HepG2 (cell line): ENCODE measurements at regions of chr22 and their contacts with region 1.

Region 1: DNA sequence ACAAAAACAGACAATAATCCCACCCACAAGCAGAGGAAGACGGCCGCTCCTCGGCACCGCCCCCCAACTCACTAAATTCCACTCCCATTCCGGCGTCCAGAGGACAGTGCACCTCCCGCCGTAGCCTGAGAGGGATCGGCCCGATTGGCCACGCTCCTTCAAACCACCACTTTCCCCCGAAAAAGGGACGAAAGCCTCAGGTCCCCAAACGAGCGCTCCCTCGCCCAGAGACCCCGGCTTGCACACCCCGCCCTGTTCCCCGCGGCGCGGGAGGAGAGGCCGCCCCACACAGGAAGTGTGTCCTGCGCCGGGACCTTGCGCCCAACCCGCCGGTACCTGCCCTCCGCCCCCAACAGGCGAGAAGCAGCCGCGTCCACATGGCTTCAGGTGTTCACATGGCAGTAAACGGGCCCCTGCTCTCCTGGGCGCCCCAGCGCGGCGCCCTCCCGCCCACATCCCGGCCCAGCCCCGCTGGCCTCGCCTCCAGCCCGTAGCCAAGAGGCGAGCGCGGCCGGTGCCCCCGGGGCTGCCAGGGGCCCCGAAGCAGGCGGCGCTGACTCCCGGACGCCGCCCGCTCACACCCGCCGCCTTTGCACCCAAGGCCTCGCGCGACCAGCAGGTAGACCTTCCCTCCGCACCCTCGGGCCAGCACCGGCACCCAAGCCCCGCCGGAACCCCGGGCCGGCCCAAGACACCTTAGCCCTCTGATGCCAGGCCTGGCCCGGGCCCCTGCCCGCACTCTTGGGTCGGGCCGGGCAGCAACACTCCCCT is 861 bp downstream of the TCF20 start:
- DNase-seq: peak; percentile 67
- ATAC-seq: peak; percentile 92
- H3K4me3 ChIP-seq: peak overlapping the region; percentile 83 to 94 (median 93)
- H3K27ac ChIP-seq: peak overlapping the region; percentile 88
- H3K4me1 ChIP-seq: peaks cover 53% of the 10 kb centered on the region
- H3K27me3 ChIP-seq: no peaks in the 10 kb centered on the region; a peak in 1 of 5 replicates
- CTCF ChIP-seq: peak; percentile 61
- EP300 ChIP-seq: no peak
- POLR2A ChIP-seq: peak; percentile 58 to 65; a peak in 3 of 4 replicates
- RAD21 ChIP-seq: peak; percentile 56

Region 2: DNA sequence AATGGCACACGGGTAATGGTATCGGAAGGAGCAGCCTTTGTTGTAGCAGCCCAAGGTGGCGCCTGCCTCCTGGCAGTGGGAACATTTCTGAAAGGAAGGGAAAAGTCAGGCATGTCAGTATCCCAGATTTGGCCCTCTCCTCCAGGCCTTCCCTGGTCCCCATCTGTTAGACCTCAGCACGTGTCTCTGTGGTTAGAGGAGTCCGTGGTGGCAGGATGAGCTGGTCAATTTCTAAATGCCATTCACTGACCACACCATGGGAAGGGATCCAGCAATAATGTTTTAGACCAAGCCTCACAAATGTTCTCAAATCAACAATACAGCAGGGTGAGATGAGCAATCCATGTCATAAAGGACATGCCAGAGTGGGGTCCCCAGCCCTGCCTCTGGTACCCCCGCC is 90.0 kb before region 1 on chr22:
- CTCF ChIA-PET with region 1: no interaction called
- POLR2A ChIA-PET with region 1: no interaction called
- in situ Hi-C with region 1: no loop called
- intact Hi-C with region 1: loop called (anchors 10 kb)
- DNase-seq: no peak
- ATAC-seq: no peak
- H3K4me3 ChIP-seq: no peak overlapping the region
- H3K27ac ChIP-seq: no peak overlapping the region
- H3K4me1 ChIP-seq: peaks cover 44% of the 10 kb centered on the region
- H3K27me3 ChIP-seq: no peaks in the 10 kb centered on the region
- CTCF ChIP-seq: no peak
- EP300 ChIP-seq: no peak
- POLR2A ChIP-seq: no peak
- RAD21 ChIP-seq: no peak

Region 3: GRCh38 chr22:42283278-42284201 is 13.9 kb after region 1 on chr22:
- CTCF ChIA-PET with region 1: no interaction called
- POLR2A ChIA-PET with region 1: no interaction called
- in situ Hi-C with region 1: no loop called
- intact Hi-C with region 1: loop called (anchors 2 kb)
- DNase-seq: no peak
- ATAC-seq: peak; percentile 29
- H3K4me3 ChIP-seq: peak overlapping the region; percentile 55 to 71 (median 58)
- H3K27ac ChIP-seq: no peak overlapping the region
- H3K4me1 ChIP-seq: peaks cover 27% of the 10 kb centered on the region
- H3K27me3 ChIP-seq: peaks cover 4 to 31% of the 10 kb centered on the region in 2 experiments; a peak in 4 of 5 replicates
- CTCF ChIP-seq: no peak
- EP300 ChIP-seq: no peak
- POLR2A ChIP-seq: no peak
- RAD21 ChIP-seq: no peak

Region 4: DNA sequence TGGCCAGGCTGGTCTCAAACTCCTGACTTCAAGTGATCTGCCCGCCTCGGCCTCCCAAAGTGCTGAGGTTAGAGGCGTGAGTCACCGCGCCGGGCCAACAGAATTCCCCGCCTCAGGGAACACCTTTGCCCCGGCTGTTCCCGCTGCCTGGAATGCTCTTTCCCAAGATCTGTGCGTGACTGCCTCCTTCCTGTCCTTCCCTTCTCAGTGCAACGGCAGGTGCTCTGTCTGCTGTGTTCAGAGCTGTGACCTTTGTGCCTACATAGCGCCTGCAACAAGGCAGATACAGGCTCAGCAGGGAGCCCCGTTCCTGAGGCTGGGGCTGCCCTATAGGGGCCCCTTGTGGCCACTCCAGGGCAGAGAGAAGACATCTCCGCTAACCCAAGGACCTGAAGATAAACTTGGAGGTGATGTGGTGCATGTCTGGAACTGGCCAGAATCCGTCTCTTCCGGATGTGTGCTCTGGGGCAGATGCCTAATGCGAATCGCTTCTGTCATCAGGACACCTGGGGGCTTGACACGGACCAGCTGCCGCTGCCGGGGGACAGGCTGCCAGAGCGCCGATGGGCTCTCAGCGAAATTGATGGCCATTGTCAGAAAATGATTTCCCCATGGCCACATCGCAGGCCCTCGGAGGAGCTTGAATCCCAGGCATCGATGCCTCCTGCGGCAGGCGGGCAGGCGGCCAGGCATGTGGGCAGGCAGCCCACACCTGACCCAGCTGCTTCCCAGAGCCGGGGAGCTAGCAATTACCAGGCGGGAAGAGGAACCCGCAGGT is 44.4 kb after region 1 on chr22:
- CTCF ChIA-PET with region 1: interaction called, 6 read pairs
- POLR2A ChIA-PET with region 1: no interaction called
- in situ Hi-C with region 1: no loop called
- intact Hi-C with region 1: loop called (anchors 2 kb)
- DNase-seq: peak; percentile 95
- ATAC-seq: peak; percentile 95
- H3K4me3 ChIP-seq: peak overlapping the region in 1 of 3 experiments; percentile 19; a peak in 1 of 6 replicates
- H3K27ac ChIP-seq: no peak overlapping the region
- H3K4me1 ChIP-seq: peaks cover 39% of the 10 kb centered on the region
- H3K27me3 ChIP-seq: peaks cover 4 to 28% of the 10 kb centered on the region in 2 experiments; a peak in 4 of 5 replicates
- CTCF ChIP-seq: peak; percentile 93
- EP300 ChIP-seq: peak; percentile 67 to 80; a peak in 2 of 4 replicates
- POLR2A ChIP-seq: no peak
- RAD21 ChIP-seq: peak; percentile 96